ENCODE measurements at regions of chr15 and their contacts with region 1.

Region 1: DNA sequence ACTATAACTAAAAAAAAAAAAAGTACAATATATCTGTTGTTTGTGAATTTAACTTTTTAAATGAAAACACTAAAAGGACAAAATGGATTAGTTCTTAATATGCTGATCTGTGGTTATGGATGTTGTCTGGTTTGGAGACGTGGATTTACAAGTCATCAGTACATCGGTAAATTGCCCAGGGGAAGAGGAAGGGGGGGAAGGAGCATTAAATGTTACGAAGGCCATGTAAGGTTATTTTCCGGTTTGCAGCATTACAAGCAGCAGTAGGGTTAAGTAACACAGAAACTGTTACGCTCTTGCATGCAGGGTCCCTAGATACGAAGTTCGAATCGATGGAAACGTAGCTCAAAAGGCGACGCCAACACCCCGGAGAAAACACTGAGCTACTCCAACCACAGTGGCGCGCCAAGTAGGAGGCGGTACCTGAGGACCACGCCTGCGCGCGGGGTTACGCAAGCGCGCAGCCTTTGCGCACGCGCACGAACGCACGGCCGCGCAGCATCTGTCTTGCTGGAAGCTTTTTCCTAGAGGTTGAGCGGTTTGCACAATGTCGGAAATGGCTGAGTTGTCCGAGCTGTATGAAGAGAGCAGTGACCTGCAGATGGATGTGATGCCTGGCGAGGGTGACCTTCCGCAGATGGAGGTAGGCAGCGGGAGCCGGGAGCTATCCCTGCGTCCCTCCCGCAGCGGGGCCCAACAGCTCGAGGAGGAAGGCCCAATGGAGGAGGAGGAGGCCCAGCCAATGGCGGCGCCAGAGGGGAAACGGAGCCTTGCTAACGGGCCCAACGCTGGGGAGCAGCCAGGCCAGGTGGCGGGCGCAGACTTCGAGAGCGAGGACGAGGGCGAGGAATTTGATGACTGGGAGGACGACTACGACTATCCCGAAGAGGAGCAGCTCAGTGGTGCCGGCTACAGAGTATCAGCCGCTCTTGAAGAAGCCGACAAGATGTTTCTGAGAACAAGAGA is at the start of gene EID1:
- DNase-seq: peak; percentile 99
- H3K4me3 Mint-ChIP-seq: peak within 1 kb of the TSS; percentile 97
- H3K27ac Mint-ChIP-seq: peak within 1 kb of the TSS; percentile 99
- H3K4me1 Mint-ChIP-seq: peaks cover 46% of the 10 kb centered on the region
- H3K27me3 Mint-ChIP-seq: peaks cover 4% of the 10 kb centered on the region
- total RNA-seq, gene EID1: 192 and 209 TPM in 2 replicates

Region 2: DNA sequence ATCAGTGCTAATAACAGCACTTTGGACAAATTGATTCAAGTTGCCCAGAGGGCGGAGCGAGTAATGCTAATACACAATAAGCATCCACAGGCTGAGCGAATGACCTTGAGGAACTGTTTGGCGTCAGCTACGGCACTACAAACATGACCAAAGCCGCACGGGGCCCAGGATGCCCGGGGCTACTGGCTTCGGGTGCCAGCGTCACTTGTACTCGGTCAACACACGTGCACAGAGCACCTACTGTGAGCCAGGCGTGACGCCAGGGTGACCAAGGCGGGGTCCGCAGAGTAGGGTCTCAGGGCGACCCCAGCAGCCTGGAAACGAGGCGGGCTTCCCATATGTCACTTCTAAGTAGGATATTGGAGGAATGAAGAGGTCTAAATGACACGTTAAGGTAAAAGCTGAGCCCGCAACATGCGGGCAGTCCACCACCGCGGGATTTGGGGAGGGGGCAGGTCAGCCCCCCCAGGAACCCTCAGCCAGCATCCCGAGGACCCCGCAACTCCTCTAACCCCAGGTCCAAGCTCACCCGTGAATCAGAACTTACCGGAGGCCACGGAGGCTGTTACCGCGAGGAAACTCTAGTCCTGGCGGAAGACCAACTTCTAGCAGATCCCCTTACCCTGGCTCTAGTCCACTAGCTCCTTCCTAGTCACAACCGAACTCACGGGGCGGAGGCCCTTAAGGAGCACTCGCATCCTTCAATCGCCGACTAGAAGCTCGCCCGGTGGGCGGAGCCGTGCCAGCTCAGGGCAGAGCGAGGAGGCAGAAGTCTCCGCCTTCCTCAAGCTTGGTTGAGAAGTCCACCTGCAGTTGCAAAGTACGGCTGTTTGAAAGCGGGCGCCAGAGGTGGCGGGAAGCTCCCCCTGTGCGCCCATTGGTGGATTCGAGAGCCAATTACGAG is 67.2 kb before region 1 on chr15 and contains the start of gene CEP152:
- intact Hi-C with region 1: loop called (anchors 2 kb)
- DNase-seq: peak; percentile 99
- H3K4me3 Mint-ChIP-seq: peak within 1 kb of the TSS; percentile 96
- H3K27ac Mint-ChIP-seq: peak within 1 kb of the TSS; percentile 96
- H3K4me1 Mint-ChIP-seq: peaks cover 35% of the 10 kb centered on the region
- H3K27me3 Mint-ChIP-seq: peaks cover 17% of the 10 kb centered on the region
- total RNA-seq, gene CEP152: 32.0 and 32.2 TPM in 2 replicates

Region 3: DNA sequence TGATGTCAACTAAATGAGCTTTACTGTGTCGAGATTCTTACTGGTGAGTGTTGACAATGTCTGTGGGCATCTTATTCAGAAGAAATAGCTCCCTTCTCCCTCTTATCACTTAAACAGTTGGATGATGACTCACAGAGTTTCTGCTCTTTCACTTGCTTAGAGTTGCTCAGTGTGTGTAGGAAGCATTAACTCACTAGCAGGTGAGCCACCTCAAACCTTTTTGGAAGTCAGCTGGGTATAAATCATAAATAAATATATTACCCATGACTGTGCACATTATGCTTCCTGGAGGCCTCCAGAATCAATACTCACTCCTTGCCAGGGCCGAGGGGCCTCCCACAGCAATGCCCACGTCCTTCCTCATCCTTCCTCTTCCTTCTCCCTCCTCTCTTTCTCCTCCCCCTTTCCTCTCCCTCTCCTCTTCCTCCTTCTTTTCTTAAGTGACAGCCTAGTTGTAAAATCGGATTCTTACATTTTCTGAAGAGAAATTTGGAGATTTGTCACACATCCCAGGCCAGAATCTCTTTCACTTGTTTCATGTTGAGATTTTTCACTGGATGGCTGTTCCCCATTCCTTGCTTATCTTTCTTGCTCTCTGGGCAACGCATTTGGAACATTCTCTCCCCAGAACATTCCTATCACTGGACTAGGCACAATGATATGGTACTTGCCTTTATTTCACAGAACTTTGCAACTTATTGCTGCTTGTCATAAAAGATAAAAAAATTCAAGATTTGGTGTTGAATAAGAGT is 68.4 kb after region 1 on chr15:
- intact Hi-C with region 1: loop called (anchors 5 kb)
- DNase-seq: no peak
- H3K4me3 Mint-ChIP-seq: no peak overlapping the region
- H3K27ac Mint-ChIP-seq: peak overlapping the region; percentile 82
- H3K4me1 Mint-ChIP-seq: peaks cover 20% of the 10 kb centered on the region
- H3K27me3 Mint-ChIP-seq: no peaks in the 10 kb centered on the region

Region 4: DNA sequence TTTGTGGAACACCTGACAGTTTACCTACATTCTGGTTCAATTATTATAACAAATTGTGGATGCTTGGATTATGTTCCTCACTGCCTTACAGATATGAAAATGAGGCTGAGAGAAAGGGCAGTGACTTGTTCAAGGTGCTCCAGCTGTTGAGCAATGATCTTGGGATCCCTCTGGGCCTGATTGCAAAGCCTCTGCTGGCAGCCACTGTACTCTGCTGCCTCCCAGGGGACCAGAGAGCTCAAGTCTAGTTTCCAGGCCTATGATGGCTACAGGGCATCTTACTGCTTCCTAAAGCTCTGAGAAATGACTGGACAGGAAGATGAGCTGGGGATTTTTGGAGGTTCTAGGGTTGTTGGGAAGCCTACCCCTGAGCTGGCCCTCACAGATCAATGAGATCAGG is 88.1 kb after region 1 on chr15:
- intact Hi-C with region 1: loop called (anchors 1 kb)
- DNase-seq: peak; percentile 72
- H3K4me3 Mint-ChIP-seq: peak overlapping the region; percentile 58
- H3K27ac Mint-ChIP-seq: peak overlapping the region; percentile 93
- H3K4me1 Mint-ChIP-seq: peaks cover 53% of the 10 kb centered on the region
- H3K27me3 Mint-ChIP-seq: peaks cover 2% of the 10 kb centered on the region

Region 5: GRCh38 chr15:49046220-49047102 is 168.5 kb after region 1 on chr15 and contains the start of gene SECISBP2L:
- intact Hi-C with region 1: loop called (anchors 1 kb)
- DNase-seq: peak; percentile 97
- H3K4me3 Mint-ChIP-seq: peak within 1 kb of the TSS; percentile 98
- H3K27ac Mint-ChIP-seq: peak within 1 kb of the TSS; percentile 90
- H3K4me1 Mint-ChIP-seq: peaks cover 22% of the 10 kb centered on the region
- H3K27me3 Mint-ChIP-seq: no peaks in the 10 kb centered on the region
- total RNA-seq, gene SECISBP2L: 38.1 and 40.0 TPM in 2 replicates

Region 6: GRCh38 chr15:49155110-49155833 is 277.4 kb after region 1 on chr15 and contains the start of gene COPS2:
- intact Hi-C with region 1: loop called (anchors 5 kb)
- DNase-seq: peak; percentile 98
- H3K4me3 Mint-ChIP-seq: peak within 1 kb of the TSS; percentile 99
- H3K27ac Mint-ChIP-seq: peak within 1 kb of the TSS; percentile 99
- H3K4me1 Mint-ChIP-seq: peaks cover 40% of the 10 kb centered on the region
- H3K27me3 Mint-ChIP-seq: peaks cover 1% of the 10 kb centered on the region
- total RNA-seq, gene COPS2: 98.6 and 99.0 TPM in 2 replicates

Region 7: GRCh38 chr15:49286649-49287404 is 408.9 kb after region 1 on chr15:
- intact Hi-C with region 1: loop called (anchors 5 kb)
- DNase-seq: no peak
- H3K4me3 Mint-ChIP-seq: peak overlapping the region; percentile 46
- H3K27ac Mint-ChIP-seq: peak overlapping the region; percentile 85
- H3K4me1 Mint-ChIP-seq: peaks cover 43% of the 10 kb centered on the region
- H3K27me3 Mint-ChIP-seq: no peaks in the 10 kb centered on the region

Measured in activated CD4-positive, alpha-beta T cell treated with anti-CD3 and anti-CD28 coated beads, Interleukin-2, amount 10 ng/mL, durations not matched to agents 24 days and 14 days (primary cell).